A673 (cell line): ENCODE measurements at regions of chr7 and their contacts with region 1.

Region 1: DNA sequence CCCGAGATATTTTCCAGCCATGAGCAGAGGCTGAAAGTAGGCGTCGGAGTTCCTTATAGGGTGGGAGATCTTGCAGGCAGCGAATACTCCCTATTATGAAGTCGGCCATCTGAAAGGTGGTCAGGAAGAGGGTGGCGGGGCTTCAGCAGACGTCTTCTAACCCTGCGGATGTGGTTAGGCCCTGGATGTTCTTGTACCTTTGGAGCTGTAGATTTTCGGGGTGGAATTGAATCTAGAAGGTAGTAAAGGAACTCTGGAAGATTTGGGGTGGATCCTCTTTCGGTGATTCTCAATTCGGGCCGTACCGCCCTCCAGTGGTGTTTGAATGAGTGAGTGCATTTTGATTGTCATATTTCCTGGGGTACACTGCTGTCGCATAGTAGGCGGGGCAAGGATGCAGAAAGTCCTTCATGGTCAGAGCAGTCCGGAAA is 635 bp downstream of the NUP205 start:
- DNase-seq: peak; percentile 91
- H3K4me3 ChIP-seq: peak overlapping the region; percentile 67
- H3K27ac ChIP-seq: peak overlapping the region; percentile 94
- H3K4me1 ChIP-seq: peaks cover 11% of the 10 kb centered on the region
- H3K27me3 ChIP-seq: no peaks in the 10 kb centered on the region
- CTCF ChIP-seq: peak; percentile 72

Region 2: DNA sequence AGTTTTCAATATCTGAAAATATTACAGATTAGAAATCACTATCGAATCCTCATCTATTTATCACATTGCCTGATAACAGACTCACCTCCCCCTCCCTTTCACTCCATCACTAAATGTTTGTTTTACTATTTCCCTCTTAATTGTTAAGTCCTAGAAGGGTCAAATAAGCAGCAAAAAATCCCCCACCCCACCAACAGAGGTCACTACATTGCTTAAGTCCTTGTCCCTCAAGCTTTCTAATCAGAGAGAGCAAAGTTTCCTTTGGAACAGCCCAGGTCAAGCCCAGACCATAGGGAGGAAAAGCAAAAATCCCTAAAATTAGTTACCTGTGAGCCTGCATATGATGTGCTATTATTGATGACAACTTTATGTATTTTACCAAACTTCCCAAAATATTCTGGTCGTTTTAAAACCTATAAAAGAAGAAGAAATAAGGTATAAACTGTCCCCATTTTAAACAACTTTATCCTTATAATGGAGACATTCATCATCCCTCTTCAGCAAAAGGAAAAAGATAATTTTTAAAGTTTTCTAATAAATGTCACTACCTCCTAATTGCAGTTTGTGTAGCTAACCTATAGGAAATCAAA is 143.4 kb before region 1 on chr7:
- CTCF ChIA-PET with region 1: no interaction called
- POLR2A ChIA-PET with region 1: no interaction called
- intact Hi-C with region 1: loop called (anchors 5 kb)
- DNase-seq: peak; percentile 64
- H3K4me3 ChIP-seq: no peak overlapping the region
- H3K27ac ChIP-seq: no peak overlapping the region
- H3K4me1 ChIP-seq: no peaks in the 10 kb centered on the region
- H3K27me3 ChIP-seq: no peaks in the 10 kb centered on the region
- CTCF ChIP-seq: peak; percentile 57

Region 3: DNA sequence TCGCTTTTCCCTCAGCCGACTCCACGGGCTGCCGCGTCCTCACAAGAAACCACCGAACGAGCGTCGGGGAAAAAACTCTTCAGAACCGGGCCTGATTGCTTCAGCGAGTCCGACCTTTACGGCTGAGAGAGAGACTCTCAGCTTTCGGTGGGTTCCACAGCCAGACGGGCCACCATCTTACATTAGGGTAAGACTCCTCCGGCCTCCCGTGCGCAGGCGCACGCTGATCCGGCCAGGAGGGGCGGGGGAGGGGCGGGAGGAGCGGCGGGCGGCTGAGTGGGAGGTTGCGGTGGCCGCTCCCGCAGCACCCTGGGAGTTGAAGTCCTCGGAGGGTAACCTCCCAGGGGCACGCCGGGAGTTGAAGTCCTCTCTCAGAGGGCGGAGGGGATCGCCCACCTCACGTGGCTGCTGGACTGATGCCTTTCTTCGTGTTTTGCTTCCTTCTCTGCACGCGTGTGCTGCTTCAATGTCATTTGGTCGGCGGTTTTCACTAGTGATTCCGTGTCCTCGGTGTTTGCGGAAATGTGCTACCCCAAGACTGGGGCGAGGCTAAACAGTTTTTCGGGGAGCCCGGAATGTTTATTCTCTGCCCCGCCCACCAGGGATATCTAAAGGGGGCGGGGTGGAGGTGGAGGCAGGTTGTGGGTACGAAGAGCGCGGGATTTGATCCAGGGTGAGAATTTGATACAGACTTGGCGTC is 48.3 kb before region 1 on chr7 and contains the start of gene CNOT4:
- CTCF ChIA-PET with region 1: no interaction called
- POLR2A ChIA-PET with region 1: no interaction called
- intact Hi-C with region 1: loop called (anchors 2 kb)
- DNase-seq: peak; percentile 99
- H3K4me3 ChIP-seq: peak within 1 kb of the TSS; percentile 82
- H3K27ac ChIP-seq: peak within 1 kb of the TSS; percentile 95
- H3K4me1 ChIP-seq: peaks cover 13% of the 10 kb centered on the region
- H3K27me3 ChIP-seq: no peaks in the 10 kb centered on the region
- CTCF ChIP-seq: no peak
- total RNA-seq, gene CNOT4: 24.1 and 24.6 TPM in 2 replicates